ENCODE measurements at regions of chr12 and their contacts with region 1.

Region 1: GRCh38 chr12:56987551-56988053 is 18.7 kb downstream of the ZBTB39 start:
- DNase-seq: peak; percentile 42 to 63
- ATAC-seq: peak; percentile 58 to 73
- H3K4me3 ChIP-seq: no peak overlapping the region
- H3K27ac ChIP-seq: no peak overlapping the region
- H3K4me1 ChIP-seq: peaks cover 0 to 6% of the 10 kb centered on the region in 2 donors
- H3K27me3 ChIP-seq: no peaks in the 10 kb centered on the region
- CTCF ChIP-seq: peak; percentile 76 to 92 (median 88)
- POLR2A ChIP-seq: no peak

Region 2: GRCh38 chr12:56243731-56244181 is 743.8 kb before region 1 on chr12:
- in situ Hi-C with region 1: no loop called
- intact Hi-C with region 1: no loop called
- DNase-seq: no peak
- ATAC-seq: no peak
- H3K4me3 ChIP-seq: no peak overlapping the region
- H3K27ac ChIP-seq: peak overlapping the region in 1 of 4 donors; percentile 38
- H3K4me1 ChIP-seq: no peaks in the 10 kb centered on the region
- H3K27me3 ChIP-seq: no peaks in the 10 kb centered on the region
- CTCF ChIP-seq: no peak
- POLR2A ChIP-seq: no peak

Region 3: DNA sequence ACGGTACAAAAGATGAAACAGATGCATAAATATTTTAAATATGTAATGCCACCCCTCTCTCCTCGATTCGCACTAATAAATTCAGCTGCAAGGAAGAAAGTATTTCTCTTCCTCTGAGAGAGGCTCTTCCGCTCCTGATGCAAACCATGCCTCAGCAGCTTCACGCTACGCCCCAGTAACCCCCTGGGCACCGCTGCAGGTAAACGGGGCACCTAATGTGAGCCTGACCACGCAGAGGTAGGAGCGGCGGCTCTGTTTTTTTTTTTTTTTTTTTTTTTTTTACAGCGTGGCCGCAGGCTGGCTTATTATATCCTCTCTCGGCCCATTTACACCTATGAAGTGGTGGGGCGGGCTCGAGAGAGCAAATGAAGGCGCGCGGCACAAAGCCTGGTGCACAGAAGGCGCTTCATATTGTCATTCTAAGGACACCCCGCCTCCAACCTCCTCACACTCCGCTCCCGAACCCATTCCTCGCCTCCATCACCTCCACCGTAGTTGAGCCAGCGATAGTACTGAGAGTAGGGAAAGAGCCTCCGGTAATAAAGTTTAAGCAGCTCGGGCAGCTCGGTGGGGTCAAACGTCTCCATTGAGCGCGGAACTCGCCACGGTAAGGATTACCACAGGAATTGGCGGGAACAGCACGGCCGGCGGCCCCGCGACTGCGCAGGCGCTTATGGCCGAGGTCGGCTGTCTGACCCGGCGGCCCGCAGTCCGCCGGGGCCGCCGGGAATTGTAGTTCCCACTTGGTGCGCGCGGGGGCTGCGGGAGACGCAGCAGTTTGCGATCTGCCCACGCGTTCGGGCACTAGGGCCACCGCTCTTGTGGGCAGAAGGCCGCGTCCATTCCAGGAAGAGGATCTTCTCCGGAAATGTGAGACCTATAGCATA is 235.6 kb before region 1 on chr12 and contains the start of gene PRIM1:
- in situ Hi-C with region 1: loop called (anchors 5 kb)
- intact Hi-C with region 1: loop called (anchors 1 kb)
- DNase-seq: peak; percentile 56 to 72
- ATAC-seq: peak; percentile 88 to 92
- H3K4me3 ChIP-seq: peak within 1 kb of the TSS; percentile 66 to 86 (median 84)
- H3K27ac ChIP-seq: peak within 1 kb of the TSS; percentile 46 to 76 (median 72)
- H3K4me1 ChIP-seq: peaks cover 3 to 8% of the 10 kb centered on the region in 2 donors
- H3K27me3 ChIP-seq: no peaks in the 10 kb centered on the region
- CTCF ChIP-seq: peak in 3 of 5 experiments; percentile 27 to 50 (median 45)
- POLR2A ChIP-seq: peak; percentile 18
- total RNA-seq, gene PRIM1: 3.2 to 5.9 (median 3.7) TPM

Measured in gastrocnemius medialis (tissue), 4 donors.